ENCODE measurements at regions of chr10 and their contacts with region 1.

Region 1: GRCh38 chr10:131979821-131980270 is 1.9 kb downstream of the BNIP3 start:
- DNase-seq: peak in 3 of 4 donors; percentile 50 to 65 (median 54)
- ATAC-seq: no peak
- H3K4me3 ChIP-seq: peak overlapping the region in 1 of 2 donors; percentile 83
- H3K27ac ChIP-seq: peak overlapping the region; percentile 28 to 96 (median 84)
- H3K4me1 ChIP-seq: peaks cover 53% of the 10 kb centered on the region
- H3K27me3 ChIP-seq: no peaks in the 10 kb centered on the region
- CTCF ChIP-seq: no peak
- POLR2A ChIP-seq: peak in 1 of 3 donors; percentile 32

Region 2: GRCh38 chr10:131352765-131353290 is 627.0 kb before region 1 on chr10:
- intact Hi-C with region 1: no loop called
- DNase-seq: no peak
- ATAC-seq: no peak
- H3K4me3 ChIP-seq: no peak overlapping the region
- H3K27ac ChIP-seq: no peak overlapping the region
- H3K4me1 ChIP-seq: no peaks in the 10 kb centered on the region
- H3K27me3 ChIP-seq: no peaks in the 10 kb centered on the region
- CTCF ChIP-seq: no peak
- POLR2A ChIP-seq: no peak

Region 3: GRCh38 chr10:131803860-131804425 is 175.9 kb before region 1 on chr10:
- intact Hi-C with region 1: no loop called
- DNase-seq: no peak
- ATAC-seq: no peak
- H3K4me3 ChIP-seq: no peak overlapping the region
- H3K27ac ChIP-seq: no peak overlapping the region
- H3K4me1 ChIP-seq: no peaks in the 10 kb centered on the region
- H3K27me3 ChIP-seq: no peaks in the 10 kb centered on the region
- CTCF ChIP-seq: no peak
- POLR2A ChIP-seq: no peak

Region 4: GRCh38 chr10:132023092-132023811 is 43.4 kb after region 1 on chr10:
- intact Hi-C with region 1: loop called (anchors 5 kb)
- DNase-seq: peak; percentile 86 to 91 (median 88)
- ATAC-seq: peak; percentile 96
- H3K4me3 ChIP-seq: no peak overlapping the region
- H3K27ac ChIP-seq: no peak overlapping the region
- H3K4me1 ChIP-seq: peaks cover 14% of the 10 kb centered on the region
- H3K27me3 ChIP-seq: no peaks in the 10 kb centered on the region
- CTCF ChIP-seq: peak; percentile 85 to 95 (median 94)
- POLR2A ChIP-seq: no peak

Region 5: GRCh38 chr10:132096223-132096622 is 116.4 kb after region 1 on chr10:
- intact Hi-C with region 1: no loop called
- DNase-seq: no peak
- ATAC-seq: no peak
- H3K4me3 ChIP-seq: no peak overlapping the region
- H3K27ac ChIP-seq: no peak overlapping the region
- H3K4me1 ChIP-seq: no peaks in the 10 kb centered on the region
- H3K27me3 ChIP-seq: no peaks in the 10 kb centered on the region
- CTCF ChIP-seq: no peak
- POLR2A ChIP-seq: no peak

Measured in body of pancreas (tissue), 4 donors.